ENCODE measurements at regions of chr9 and their contacts with region 1.

Region 1: GRCh38 chr9:12884737-12885414 is 110.1 kb downstream of the LURAP1L start:
- DNase-seq: peak; percentile 84
- H3K4me3 Mint-ChIP-seq: no peak overlapping the region
- H3K27ac Mint-ChIP-seq: no peak overlapping the region
- H3K4me1 Mint-ChIP-seq: peaks cover 13% of the 10 kb centered on the region
- H3K27me3 Mint-ChIP-seq: no peaks in the 10 kb centered on the region
- CTCF ChIP-seq: peak; percentile 62

Region 2: DNA sequence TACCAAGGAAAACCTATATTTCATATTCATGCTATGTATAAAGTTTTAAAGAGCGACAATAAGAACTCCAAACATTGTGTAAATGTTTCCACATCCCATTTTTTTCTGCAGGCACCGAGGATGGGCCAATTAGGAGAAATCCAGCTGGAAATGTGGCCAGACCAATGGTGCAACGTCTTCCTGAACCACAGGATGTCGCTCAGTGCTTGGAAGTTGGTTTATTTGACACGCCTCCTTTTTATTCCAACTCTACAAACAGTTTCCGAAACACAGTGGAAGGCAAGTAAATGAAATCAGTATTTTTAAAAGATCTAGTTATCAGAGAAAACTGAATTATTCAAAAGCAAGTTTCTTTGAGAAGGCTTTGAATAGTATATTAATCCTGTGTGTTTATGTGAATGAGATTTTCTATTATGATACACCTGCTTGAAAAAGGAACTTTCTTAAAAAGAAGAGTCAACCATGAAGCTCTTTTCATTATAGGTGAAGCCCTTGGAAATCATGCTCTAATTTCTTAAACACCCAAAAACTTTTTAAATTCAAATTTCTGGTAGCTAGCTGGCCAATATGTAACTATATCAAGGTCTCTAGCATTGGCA is 182.6 kb before region 1 on chr9:
- CTCF ChIA-PET with region 1: interaction called, 6 read pairs
- POLR2A ChIA-PET with region 1: no interaction called
- intact Hi-C with region 1: loop called (anchors 1 kb)
- DNase-seq: peak; percentile 76
- H3K4me3 Mint-ChIP-seq: no peak overlapping the region
- H3K27ac Mint-ChIP-seq: no peak overlapping the region
- H3K4me1 Mint-ChIP-seq: peaks cover 16% of the 10 kb centered on the region
- H3K27me3 Mint-ChIP-seq: no peaks in the 10 kb centered on the region
- CTCF ChIP-seq: peak; percentile 58

Region 3: GRCh38 chr9:12972608-12973589 is 88.0 kb after region 1 on chr9:
- CTCF ChIA-PET with region 1: interaction called, 3 read pairs
- POLR2A ChIA-PET with region 1: no interaction called
- intact Hi-C with region 1: loop called (anchors 10 kb)
- DNase-seq: no peak
- H3K4me3 Mint-ChIP-seq: no peak overlapping the region
- H3K27ac Mint-ChIP-seq: no peak overlapping the region
- H3K4me1 Mint-ChIP-seq: peaks cover 8% of the 10 kb centered on the region
- H3K27me3 Mint-ChIP-seq: no peaks in the 10 kb centered on the region
- CTCF ChIP-seq: no peak